ENCODE measurements at regions of chr18 and their contacts with region 1.

Region 1: DNA sequence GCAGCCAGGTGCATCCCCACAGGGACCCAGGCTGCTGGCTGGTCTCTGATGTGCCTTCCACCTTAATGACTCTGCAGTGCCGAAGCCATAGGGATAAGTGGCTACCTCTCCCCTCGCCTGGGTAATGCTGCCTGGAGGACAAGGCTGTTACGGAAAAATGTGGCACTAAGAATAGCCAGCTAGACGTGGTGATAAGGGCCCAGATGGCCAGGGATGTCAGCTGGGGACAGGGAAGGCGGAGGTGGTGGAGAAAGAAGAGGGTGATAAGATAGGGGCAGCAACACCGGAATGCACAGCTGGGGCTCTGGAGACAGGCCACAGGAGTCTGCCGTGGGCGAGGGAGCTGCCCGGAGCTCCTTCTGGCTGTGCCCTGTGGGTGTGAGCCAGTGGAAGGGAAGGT is 170.6 kb downstream of the FHOD3 start:
- DNase-seq: peak; percentile 86

Region 2: DNA sequence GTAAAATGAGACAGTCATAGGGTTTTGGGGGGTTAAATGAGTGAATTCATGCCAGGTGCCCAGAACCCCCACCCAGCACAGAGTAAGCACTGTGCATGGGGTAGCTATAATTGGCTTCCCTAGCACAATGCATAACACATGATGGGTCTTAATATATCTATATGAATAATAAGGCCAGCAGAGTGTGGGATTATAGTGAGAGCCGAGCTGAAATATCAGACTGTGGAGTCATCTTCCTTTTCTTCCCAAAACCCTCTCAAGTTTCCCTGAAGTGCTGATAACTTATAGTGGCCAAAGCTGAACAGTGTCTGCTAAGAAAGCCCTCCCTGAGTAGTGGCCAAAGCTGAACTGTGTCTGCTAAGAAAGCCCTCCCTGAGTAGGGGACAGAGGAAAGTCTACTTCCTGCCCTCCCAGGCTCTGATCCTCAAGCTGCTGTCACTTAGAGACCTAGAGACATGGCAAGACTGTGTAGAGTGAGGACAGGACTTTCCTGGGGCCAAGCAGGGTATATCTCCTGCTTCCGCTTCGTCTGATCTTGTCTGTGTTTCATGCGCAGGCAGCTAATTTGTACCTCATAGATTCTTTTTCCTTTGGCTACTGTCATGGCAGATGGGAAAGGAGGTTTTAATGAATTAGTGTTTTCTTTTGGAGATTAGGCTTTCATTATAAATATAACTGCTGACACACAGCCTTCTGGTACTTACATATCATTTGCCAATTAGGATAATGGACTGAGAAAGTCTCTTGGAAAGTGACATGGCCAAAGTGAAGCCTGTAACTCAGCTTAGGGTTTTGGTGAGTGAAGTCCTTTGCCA is 75.8 kb before region 1 on chr18:
- intact Hi-C with region 1: loop called (anchors 2 kb)
- DNase-seq: no peak

Region 3: GRCh38 chr18:36640021-36640952 is 172.1 kb after region 1 on chr18:
- intact Hi-C with region 1: loop called (anchors 10 kb)
- DNase-seq: no peak

Measured in cardiac septum (tissue), 1 donor.